ENCODE measurements at regions of chr7 and their contacts with region 1.

Region 1: DNA sequence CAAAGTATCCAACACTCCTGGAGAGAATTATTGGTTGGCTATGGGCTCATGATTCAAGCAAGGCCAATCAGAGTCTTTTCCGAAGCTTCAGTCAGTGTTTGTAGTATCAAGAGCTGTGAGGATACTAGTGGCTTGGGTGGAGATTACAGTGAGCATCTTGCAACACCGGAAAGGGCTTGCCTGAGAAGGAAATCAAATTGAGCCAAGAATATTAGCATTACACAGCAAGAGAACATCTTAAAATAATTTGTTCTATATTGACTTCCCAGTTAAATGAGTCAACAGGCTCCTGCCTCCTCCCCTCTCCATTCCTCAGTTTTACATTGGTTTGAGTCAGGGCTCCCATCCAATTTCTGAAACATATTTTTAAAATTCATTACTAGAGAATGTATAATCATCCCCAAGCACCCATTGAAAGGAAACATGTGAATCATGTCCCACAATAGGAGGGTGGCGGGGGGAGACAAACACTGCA is 127.4 kb downstream of the ELAPOR2 start:
- DNase-seq: peak in 1 of 2 donors; percentile 81
- H3K4me3 ChIP-seq: no peak overlapping the region
- H3K27ac ChIP-seq: peak overlapping the region in 1 of 2 donors; percentile 68
- H3K4me1 ChIP-seq: peaks cover 0 to 2% of the 10 kb centered on the region in 2 donors
- H3K27me3 ChIP-seq: no peaks in the 10 kb centered on the region
- CTCF ChIP-seq: no peak

Region 2: GRCh38 chr7:87059525-87060287 is 127.6 kb after region 1 on chr7 and contains the start of gene ELAPOR2:
- intact Hi-C with region 1: loop called (anchors 2 kb)
- DNase-seq: peak; percentile 33 to 87
- H3K4me3 ChIP-seq: peak within 1 kb of the TSS; percentile 72 to 98
- H3K27ac ChIP-seq: peak within 1 kb of the TSS in 1 of 2 donors; percentile 45
- H3K4me1 ChIP-seq: peaks cover 0 to 9% of the 10 kb centered on the region in 2 donors
- H3K27me3 ChIP-seq: no peaks in the 10 kb centered on the region
- CTCF ChIP-seq: peak; percentile 44 to 58 (median 53)
- total RNA-seq, gene ELAPOR2: 1.1 TPM